ENCODE measurements at regions of chr1 and their contacts with region 1.

Region 1: GRCh38 chr1:95072532-95073419 is at the start of gene ALG14:
- DNase-seq: peak; percentile 97
- H3K4me3 ChIP-seq: peak within 1 kb of the TSS; percentile 25 to 75 (median 65)
- H3K27ac ChIP-seq: peak within 1 kb of the TSS; percentile 50
- H3K4me1 ChIP-seq: peaks cover 7% of the 10 kb centered on the region
- H3K27me3 ChIP-seq: peaks cover 1 to 5% of the 10 kb centered on the region in 2 experiments
- CTCF ChIP-seq: no peak
- POLR2A ChIP-seq: peak; percentile 69
- total RNA-seq, gene ALG14: 8.6 and 12.3 TPM in 2 replicates

Region 2: GRCh38 chr1:95116580-95117206 is 43.9 kb after region 1 on chr1:
- CTCF ChIA-PET with region 1: interaction called, 10 read pairs
- POLR2A ChIA-PET with region 1: no interaction called
- dilution Hi-C with region 1: no loop called
- intact Hi-C with region 1: loop called (anchors 5 kb)
- DNase-seq: peak; percentile 50
- H3K4me3 ChIP-seq: peak overlapping the region; percentile 4 to 57 (median 38)
- H3K27ac ChIP-seq: no peak overlapping the region
- H3K4me1 ChIP-seq: no peaks in the 10 kb centered on the region
- H3K27me3 ChIP-seq: peaks cover 25 to 35% of the 10 kb centered on the region in 2 experiments
- CTCF ChIP-seq: peak; percentile 45 to 78
- POLR2A ChIP-seq: no peak